Activated naive CD4-positive, alpha-beta T cell treated with anti-CD3 and anti-CD28 coated beads, Interleukin-2, amount 10 ng/mL, durations not matched to agents 7 days and 5 days (primary cell): ENCODE measurements at regions of chr1 and their contacts with region 1.

Region 1: GRCh38 chr1:10209905-10210810 is at the start of gene KIF1B:
- DNase-seq: peak; percentile 96
- H3K4me3 Mint-ChIP-seq: peak within 1 kb of the TSS; percentile 78
- H3K27ac Mint-ChIP-seq: peak within 1 kb of the TSS; percentile 65
- H3K4me1 Mint-ChIP-seq: peaks cover 26% of the 10 kb centered on the region
- H3K27me3 Mint-ChIP-seq: peaks cover 42% of the 10 kb centered on the region

Region 2: GRCh38 chr1:10324627-10325026 is 114.5 kb after region 1 on chr1:
- CTCF ChIA-PET with region 1: interaction called, 14 read pairs
- DNase-seq: no peak
- H3K4me3 Mint-ChIP-seq: no peak overlapping the region
- H3K27ac Mint-ChIP-seq: peak overlapping the region; percentile 3
- H3K4me1 Mint-ChIP-seq: no peaks in the 10 kb centered on the region
- H3K27me3 Mint-ChIP-seq: no peaks in the 10 kb centered on the region

Region 3: DNA sequence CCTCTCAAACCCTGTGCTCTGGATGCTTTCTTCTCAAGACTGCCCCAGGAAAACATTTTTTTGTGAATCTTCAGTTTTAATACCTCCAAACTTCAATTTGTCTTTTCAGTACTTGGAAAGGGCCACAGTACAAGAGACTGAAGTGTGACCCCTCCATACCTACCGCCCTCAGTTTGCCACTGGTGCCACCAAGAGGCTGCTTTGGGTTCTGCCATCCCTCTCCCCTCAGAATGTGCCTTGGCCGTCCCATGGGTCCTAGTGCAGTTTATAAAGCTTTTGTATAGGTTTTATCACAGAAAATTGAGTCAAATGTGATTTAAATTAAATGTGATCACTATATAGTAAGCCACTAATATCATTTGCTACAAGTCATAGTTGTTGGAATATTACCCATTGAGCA is 127.9 kb after region 1 on chr1:
- CTCF ChIA-PET with region 1: interaction called, 19 read pairs
- DNase-seq: peak; percentile 50
- H3K4me3 Mint-ChIP-seq: no peak overlapping the region
- H3K27ac Mint-ChIP-seq: no peak overlapping the region
- H3K4me1 Mint-ChIP-seq: no peaks in the 10 kb centered on the region
- H3K27me3 Mint-ChIP-seq: no peaks in the 10 kb centered on the region